GM13976 (cell line): ENCODE measurements at regions of chr18 and their contacts with region 1.

Region 1: DNA sequence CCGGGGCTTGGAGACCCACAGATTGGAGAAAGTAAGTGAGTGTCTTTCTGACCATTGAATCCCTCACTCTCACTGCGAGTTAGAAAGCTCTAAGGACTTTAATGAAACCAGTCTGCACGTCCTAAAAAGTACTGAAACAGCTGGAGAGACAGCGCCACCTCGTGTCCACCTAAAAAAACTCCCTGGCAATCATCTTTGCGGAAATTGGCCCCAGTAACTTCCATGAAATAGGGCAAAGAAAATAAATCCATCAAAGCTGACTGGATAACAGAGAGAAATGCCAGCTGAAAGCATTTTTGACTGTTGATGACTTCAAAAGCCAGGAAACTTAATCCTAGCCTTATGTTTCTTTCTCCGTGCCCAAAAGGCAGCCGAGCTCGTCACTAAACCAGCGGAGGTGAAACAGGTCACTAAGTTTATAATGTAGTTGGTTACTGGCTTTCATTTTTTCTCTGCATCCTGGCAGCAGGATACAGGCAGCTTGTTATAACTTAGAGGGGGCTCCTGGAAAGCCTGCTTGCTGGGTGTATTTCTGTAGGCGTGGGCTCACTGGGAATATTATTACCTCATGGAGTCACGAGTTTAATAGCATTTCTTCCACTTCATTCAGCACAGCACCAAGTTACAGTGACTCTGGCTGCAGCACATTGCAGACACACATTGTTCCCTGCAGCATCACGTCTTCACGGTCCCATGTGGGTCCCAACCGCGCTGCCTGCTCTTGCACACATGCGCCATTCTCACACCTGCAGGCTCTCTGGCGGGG is 266.5 kb downstream of the HRH4 start:
- DNase-seq: peak; percentile 47
- CTCF ChIP-seq: peak; percentile 63

Region 2: DNA sequence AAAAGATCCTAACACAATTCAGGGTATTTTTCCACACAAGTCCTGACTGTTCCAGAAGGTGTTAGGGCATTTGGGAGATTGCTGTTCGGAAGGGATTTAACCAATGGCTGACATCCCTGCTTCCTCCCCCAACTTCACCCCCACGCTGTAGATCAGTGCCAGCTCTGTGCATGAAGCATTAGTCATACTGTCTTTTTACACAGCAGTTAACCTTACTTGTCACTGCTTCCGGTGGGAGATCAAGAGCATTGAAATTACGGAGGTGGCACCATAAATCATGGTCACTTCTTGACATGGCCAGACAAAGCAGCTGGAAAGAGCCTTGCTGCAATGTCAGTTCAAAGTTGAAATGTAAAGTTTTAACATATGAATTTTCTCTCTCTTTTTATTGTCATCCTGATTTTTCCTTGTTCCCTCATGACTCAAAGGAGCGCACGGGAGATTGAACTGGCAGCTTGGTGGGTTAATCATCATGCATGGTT is 196.2 kb before region 1 on chr18:
- in situ Hi-C with region 1: no loop called
- DNase-seq: no peak
- CTCF ChIP-seq: no peak

Region 3: DNA sequence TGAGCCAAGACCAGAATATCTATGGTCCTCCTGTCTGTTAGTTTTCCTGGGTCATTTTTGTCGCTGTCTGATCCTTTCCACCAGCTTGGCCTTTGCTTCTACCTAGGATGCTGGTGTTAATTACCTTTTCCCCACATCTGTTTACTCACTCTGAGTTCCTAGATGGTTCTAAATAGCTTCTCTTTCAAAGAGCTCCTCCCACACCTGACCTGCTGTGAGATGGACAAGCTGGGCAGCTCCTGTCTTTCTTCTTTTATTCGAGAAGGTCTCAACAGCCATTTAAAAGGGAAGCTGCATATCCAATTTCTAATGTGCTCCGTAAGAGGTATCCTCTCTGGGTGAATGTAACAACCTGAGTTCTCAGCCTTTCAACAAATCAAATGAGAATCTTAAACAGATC is 110.3 kb before region 1 on chr18:
- in situ Hi-C with region 1: loop called (anchors 10 kb)
- DNase-seq: no peak
- CTCF ChIP-seq: no peak

Region 4: GRCh38 chr18:25005541-25006403 is 278.9 kb after region 1 on chr18:
- in situ Hi-C with region 1: no loop called
- DNase-seq: no peak
- CTCF ChIP-seq: no peak